HCT116 (cell line): ENCODE measurements at regions of chr5 and their contacts with region 1.

Region 1: DNA sequence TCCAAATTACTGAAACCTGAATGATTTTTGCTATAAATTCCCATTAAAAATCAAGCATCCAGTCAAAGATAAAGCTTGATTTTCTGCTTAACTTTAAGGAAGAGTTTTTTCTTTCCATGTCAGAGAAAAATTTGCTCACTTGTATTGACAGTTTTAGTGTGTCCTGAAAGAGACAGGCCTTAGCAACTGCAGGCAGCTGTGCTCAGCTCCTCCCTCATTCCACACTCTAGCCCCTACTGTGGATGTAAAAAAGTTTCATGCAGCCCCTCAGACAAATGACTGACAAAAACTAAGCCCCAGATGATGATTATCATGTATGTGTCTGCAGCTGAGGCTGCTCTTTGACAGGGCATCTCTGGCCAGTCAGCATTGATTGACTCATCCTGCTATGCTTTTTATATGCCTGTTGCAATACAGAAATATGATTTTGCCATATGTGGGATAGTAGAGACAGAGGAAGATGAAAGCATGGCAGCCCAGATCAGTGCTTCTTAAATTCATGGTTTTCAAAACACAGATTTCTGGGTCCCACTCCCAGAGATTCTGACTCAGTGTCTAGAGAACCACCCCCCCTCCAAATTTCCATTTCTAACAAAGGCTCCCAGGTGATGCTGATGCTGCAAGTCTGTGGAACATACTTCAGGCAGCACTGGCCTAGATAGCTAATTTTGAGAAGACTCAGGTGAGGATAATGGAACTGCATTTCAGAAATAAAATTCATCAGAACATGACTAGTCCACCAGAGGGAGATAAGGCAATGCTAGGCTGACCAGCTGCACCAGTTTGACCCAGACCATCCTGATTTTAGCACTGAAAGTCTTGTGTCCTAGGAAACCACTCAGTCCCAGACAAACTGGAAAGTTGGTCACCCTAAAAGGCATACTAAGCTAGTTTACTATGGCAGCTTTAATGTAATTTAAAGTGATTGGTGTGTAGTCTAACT is 298.7 kb upstream of the KCNN2 start:
- DNase-seq: no peak
- ATAC-seq: no peak
- H3K4me3 ChIP-seq: no peak overlapping the region
- H3K27ac ChIP-seq: no peak overlapping the region
- H3K4me1 ChIP-seq: no peaks in the 10 kb centered on the region
- H3K27me3 ChIP-seq: peaks cover 6% of the 10 kb centered on the region; the same call in 1 of the 2 replicates
- CTCF ChIP-seq: no peak; a peak in 1 of 6 replicates
- POLR2A ChIP-seq: no peak
- RAD21 ChIP-seq: 0 out of 2 replicates have a peak, but pooled peaks have one; percentile 8

Region 2: DNA sequence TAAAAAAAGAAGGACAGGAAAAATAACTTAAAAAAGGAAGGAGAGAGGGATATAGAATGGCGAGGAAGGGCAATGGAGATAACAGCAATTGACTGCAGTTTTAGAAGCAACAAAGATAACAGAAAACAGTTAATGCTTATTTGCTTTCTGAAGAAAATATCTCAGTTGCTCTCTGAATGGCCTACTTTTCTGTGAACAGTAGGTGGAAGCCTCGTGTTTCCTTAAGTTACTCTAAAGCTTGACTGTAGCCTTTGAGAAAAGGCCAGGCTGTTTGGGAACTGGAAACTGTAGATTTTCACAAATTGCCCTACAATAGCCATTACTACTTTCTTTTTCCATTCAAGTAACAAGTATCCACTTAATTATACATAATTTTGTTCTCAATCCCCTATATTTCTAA is 145.2 kb before region 1 on chr5:
- CTCF ChIA-PET with region 1: no interaction called
- POLR2A ChIA-PET with region 1: no interaction called
- RAD21 ChIA-PET with region 1: no interaction called
- intact Hi-C with region 1: no loop called
- DNase-seq: no peak
- ATAC-seq: no peak
- H3K4me3 ChIP-seq: no peak overlapping the region
- H3K27ac ChIP-seq: no peak overlapping the region
- H3K4me1 ChIP-seq: no peaks in the 10 kb centered on the region
- H3K27me3 ChIP-seq: peaks cover 9% of the 10 kb centered on the region; the same call in 1 of the 2 replicates
- CTCF ChIP-seq: no peak
- POLR2A ChIP-seq: no peak
- RAD21 ChIP-seq: no peak

Region 3: GRCh38 chr5:114192108-114192507 is 128.9 kb after region 1 on chr5:
- CTCF ChIA-PET with region 1: no interaction called
- POLR2A ChIA-PET with region 1: no interaction called
- RAD21 ChIA-PET with region 1: no interaction called
- intact Hi-C with region 1: no loop called
- DNase-seq: no peak
- ATAC-seq: no peak
- H3K4me3 ChIP-seq: no peak overlapping the region
- H3K27ac ChIP-seq: no peak overlapping the region
- H3K4me1 ChIP-seq: no peaks in the 10 kb centered on the region
- H3K27me3 ChIP-seq: no peaks in the 10 kb centered on the region
- CTCF ChIP-seq: no peak
- POLR2A ChIP-seq: no peak
- RAD21 ChIP-seq: no peak

Region 4: DNA sequence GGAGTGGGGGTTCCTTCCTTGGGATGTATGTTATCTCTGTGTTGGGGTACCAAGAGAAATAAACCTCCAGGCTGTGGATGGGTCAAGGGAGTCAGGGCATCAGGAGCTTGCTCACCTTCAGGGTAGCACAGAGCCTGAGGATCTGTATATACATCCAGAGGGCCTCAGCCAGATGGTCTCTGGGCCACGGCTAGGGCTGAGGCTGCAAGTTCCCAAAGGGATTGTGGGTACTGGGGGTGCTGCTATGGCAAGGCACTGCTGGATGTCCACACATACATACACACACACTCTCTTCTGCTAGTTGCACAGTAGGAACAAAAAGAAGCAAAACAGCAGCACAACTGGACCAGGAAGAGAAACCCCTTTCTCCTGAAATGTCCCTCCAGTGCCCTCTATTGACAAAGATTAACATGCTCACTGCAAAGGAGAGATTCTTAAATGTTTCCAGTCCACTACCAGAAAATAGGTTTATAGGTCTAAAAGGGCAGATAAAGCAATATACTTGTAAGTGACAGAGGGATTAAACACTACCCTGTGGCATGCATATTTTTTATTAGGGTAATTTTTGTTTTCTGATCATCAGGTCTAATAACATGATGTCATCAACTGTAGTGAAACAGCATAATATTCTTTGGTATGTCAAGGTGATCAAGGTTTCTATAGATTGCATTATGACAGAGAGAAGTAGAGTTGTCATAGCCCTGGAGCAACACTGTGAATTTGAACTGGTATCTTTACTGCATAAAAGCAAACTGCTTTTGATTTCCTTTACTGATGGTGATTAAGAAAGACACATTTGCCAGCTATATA is 242.4 kb after region 1 on chr5:
- CTCF ChIA-PET with region 1: no interaction called
- POLR2A ChIA-PET with region 1: no interaction called
- RAD21 ChIA-PET with region 1: no interaction called
- intact Hi-C with region 1: loop called (anchors 10 kb)
- DNase-seq: no peak
- ATAC-seq: peak; percentile 63; the same call in 1 of the 2 replicates
- H3K4me3 ChIP-seq: no peak overlapping the region
- H3K27ac ChIP-seq: no peak overlapping the region
- H3K4me1 ChIP-seq: no peaks in the 10 kb centered on the region
- H3K27me3 ChIP-seq: peaks cover 16% of the 10 kb centered on the region
- CTCF ChIP-seq: peak; percentile 25 to 50 (median 26); a peak in 4 of 6 replicates
- POLR2A ChIP-seq: no peak
- RAD21 ChIP-seq: peak; percentile 43